Activated T-helper 1 cell treated with anti-CD3 and anti-CD28 coated beads, Interleukin-12 subunit alpha, Interleukin-12 subunit beta, Interleukin-2, Interleukin-4 antibody, amounts not matched to agents 30 ng/mL and 10 ng/mL and 1 ng/mL, durations not matched to agents 14 hours and 24 hours and 36 hours (primary cell): ENCODE measurements at regions of chr4 and their contacts with region 1.

Region 1: DNA sequence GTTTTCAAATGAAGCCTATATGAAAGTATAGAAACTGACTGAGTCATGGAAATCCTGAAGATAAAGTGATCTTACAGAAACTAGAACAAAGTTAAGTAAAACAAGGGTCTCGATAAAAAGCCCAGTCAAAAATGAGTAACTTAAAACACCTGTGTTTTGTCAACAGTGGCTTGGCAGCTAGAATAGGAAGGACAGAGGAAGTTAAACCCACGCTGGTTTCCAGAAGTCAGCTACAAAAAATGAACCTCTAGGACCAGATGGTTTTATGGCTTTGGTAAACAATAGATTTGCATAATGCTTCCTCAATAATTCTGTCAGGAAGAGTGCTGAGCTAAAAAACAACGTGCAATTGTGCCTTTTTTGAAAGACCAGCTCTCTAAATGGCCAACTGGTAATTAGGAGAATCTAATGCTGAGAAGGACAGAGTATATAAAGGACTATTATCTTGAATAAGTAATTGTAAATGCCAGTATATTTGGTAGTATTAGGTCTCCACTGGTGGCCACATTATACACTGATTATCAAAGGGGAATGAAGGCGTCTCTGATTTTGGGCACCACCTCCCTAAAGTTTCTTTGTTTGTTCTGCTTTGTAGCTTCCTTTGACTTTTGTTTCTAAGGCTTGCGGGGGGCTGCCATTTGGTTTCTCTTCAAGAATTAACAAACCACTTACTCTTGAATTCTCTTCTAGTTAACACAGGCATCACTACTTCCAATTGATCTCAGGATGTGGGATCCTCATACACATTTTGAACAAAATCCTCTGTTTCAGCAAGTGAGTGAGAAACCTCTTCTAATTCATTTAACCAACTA is 72.2 kb upstream of the PPP3CA start:
- DNase-seq: no peak
- H3K4me3 Mint-ChIP-seq: peak overlapping the region; percentile 65
- H3K27ac Mint-ChIP-seq: peak overlapping the region; percentile 79
- H3K4me1 Mint-ChIP-seq: peaks cover 58% of the 10 kb centered on the region
- H3K27me3 Mint-ChIP-seq: peaks cover 11% of the 10 kb centered on the region

Region 2: DNA sequence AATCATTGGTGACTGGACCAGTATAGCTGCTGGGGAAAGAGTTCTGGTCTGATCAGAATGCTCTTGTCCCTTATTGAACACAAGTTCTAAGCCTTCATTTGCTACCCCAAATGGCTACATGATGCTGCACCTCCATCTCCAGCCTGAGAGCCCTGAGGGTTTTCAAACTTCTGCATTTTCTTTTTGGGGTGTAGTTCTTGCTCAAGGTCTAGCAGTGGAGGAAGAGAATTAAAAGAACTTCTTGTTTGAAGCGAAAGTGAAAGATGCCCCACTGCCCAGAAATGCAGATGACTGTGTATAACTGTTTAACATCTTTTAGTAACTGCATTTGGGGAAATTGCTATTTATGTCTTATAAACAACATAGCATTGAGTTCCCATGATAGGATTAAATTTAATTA is 1563.9 kb before region 1 on chr4:
- intact Hi-C with region 1: loop called (anchors 5 kb)
- DNase-seq: no peak
- H3K4me3 Mint-ChIP-seq: peak overlapping the region; percentile 59
- H3K27ac Mint-ChIP-seq: peak overlapping the region; percentile 71
- H3K4me1 Mint-ChIP-seq: peaks cover 86% of the 10 kb centered on the region
- H3K27me3 Mint-ChIP-seq: no peaks in the 10 kb centered on the region

Region 3: DNA sequence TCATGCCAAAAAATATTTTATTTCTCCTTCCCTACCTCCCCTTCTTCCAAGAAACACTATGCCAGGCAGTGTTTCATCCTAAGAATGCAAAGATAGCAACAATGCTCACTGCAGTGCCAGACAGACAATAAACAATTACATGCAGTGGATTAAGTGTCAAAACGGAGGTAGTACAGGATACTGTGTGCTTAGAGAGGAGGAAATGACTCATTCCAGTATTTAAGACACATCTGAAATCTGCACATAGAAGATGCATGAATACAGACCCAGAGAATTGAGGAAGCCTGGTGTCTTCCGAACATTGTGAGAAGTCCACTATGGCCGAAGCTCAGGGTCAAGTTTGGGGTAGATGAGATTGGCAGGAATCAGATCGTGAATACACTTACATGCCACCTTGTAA is 398.6 kb before region 1 on chr4:
- intact Hi-C with region 1: loop called (anchors 1 kb)
- DNase-seq: peak; percentile 16
- H3K4me3 Mint-ChIP-seq: peak overlapping the region; percentile 43
- H3K27ac Mint-ChIP-seq: peak overlapping the region; percentile 67
- H3K4me1 Mint-ChIP-seq: peaks cover 62% of the 10 kb centered on the region
- H3K27me3 Mint-ChIP-seq: no peaks in the 10 kb centered on the region

Region 4: GRCh38 chr4:101282076-101282844 is 137.3 kb before region 1 on chr4:
- intact Hi-C with region 1: loop called (anchors 2 kb)
- DNase-seq: peak; percentile 8
- H3K4me3 Mint-ChIP-seq: peak overlapping the region; percentile 31
- H3K27ac Mint-ChIP-seq: no peak overlapping the region
- H3K4me1 Mint-ChIP-seq: peaks cover 43% of the 10 kb centered on the region
- H3K27me3 Mint-ChIP-seq: no peaks in the 10 kb centered on the region

Region 5: DNA sequence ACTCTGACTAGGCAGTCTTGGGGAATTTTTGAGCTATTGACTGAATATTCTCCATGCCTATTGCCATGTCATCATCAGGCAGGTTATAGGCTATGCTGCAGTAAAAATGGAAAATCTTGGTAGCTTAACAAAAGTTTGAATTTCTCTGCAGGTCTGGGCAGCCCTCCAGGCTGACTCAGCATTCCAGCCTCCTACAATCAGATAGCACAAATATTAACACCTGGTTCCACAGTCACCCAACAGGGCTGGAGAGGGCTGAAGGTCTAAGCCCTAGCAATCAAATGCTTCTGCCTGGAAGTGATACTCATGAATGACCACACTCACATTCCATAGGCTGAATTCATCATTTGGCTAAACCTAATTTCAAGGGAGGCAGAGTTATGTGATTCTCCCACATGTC is 62.6 kb before region 1 on chr4:
- intact Hi-C with region 1: no loop called
- DNase-seq: no peak
- H3K4me3 Mint-ChIP-seq: no peak overlapping the region
- H3K27ac Mint-ChIP-seq: no peak overlapping the region
- H3K4me1 Mint-ChIP-seq: no peaks in the 10 kb centered on the region
- H3K27me3 Mint-ChIP-seq: peaks cover 45% of the 10 kb centered on the region

Region 6: DNA sequence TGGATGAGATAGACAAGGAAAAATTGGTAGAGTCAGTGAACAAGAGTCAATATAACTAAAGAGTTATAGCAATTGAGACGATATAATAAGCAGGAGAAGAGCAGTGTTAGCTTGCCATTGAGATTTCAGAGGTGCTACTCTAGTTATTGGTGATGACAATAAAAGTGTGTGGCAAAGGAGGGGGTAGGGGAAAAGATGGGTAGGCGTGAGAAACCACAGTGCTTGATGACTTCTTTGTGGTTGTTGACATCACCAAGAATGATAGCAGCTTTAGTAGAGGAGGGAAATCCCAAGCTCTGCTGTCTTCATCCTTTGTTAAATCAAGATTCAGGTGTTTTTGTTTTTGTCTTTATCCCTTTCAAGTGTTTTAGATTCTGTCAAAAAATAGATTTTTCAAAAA is 107.7 kb after region 1 on chr4:
- intact Hi-C with region 1: loop called (anchors 1 kb)
- DNase-seq: peak; percentile 68
- H3K4me3 Mint-ChIP-seq: peak overlapping the region; percentile 8
- H3K27ac Mint-ChIP-seq: peak overlapping the region; percentile 67
- H3K4me1 Mint-ChIP-seq: peaks cover 32% of the 10 kb centered on the region
- H3K27me3 Mint-ChIP-seq: peaks cover 26% of the 10 kb centered on the region

Region 7: DNA sequence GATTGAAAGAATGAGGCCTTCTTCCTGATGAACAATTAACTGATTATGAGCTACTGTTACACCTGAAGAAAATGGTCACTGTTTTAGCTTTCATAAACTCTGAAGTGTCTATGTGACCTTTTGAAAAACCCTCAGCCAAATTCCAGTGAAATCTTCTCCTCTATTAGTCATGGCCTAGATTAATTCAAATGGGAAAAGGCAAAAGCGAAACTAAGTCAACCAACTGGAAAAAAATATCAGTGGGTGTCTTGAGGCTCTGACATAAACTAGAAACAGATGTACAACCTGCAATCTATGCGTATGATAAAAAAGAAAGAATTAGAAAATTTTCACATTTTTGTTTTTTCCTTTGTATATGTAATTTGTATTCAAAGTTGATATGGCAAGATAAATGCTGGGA is 201.6 kb after region 1 on chr4:
- intact Hi-C with region 1: no loop called
- DNase-seq: no peak
- H3K4me3 Mint-ChIP-seq: no peak overlapping the region
- H3K27ac Mint-ChIP-seq: no peak overlapping the region
- H3K4me1 Mint-ChIP-seq: peaks cover 7% of the 10 kb centered on the region
- H3K27me3 Mint-ChIP-seq: no peaks in the 10 kb centered on the region

Region 8: GRCh38 chr4:102390438-102390837 is 970.9 kb after region 1 on chr4:
- intact Hi-C with region 1: loop called (anchors 5 kb)
- DNase-seq: no peak
- H3K4me3 Mint-ChIP-seq: no peak overlapping the region
- H3K27ac Mint-ChIP-seq: peak overlapping the region; percentile 58
- H3K4me1 Mint-ChIP-seq: peaks cover 20% of the 10 kb centered on the region
- H3K27me3 Mint-ChIP-seq: peaks cover 7% of the 10 kb centered on the region

Region 9: DNA sequence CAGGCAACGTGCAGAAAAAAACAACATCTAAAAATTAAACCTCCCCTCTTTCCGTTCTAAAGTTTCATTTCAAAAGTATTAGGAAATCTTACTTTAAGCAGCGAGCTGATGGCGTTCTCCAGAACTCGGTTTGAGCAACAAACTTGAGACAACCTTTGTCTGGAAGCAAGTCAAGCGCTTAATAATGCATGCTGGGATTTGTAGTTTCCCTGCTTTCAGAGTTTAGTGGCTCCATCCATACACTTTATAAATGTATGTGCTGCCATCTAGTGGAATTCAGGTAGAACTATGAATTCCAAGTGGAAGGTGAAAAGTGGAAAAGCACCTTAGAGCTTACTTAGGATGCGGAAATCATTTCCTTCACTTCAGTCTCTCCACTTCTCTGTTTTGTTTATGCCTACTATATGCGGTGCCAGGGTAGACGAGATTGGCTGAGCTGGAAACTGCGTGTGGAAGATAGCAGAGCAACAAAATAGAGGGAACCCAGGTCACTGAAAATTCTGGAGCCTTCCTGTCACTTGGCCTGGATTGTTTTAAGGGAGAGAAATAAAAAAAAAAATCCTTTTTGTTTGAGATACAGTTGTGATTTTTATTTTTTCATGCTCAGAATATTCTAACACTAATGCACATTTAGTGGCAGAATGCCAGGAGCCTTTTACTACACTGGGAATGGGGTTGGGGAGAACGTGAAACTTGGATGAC is 1680.3 kb after region 1 on chr4 and contains the start of gene BDH2:
- intact Hi-C with region 1: loop called (anchors 10 kb)
- DNase-seq: peak; percentile 41
- H3K4me3 Mint-ChIP-seq: peak within 1 kb of the TSS; percentile 84
- H3K27ac Mint-ChIP-seq: peak within 1 kb of the TSS; percentile 86
- H3K4me1 Mint-ChIP-seq: peaks cover 28% of the 10 kb centered on the region
- H3K27me3 Mint-ChIP-seq: no peaks in the 10 kb centered on the region
- total RNA-seq, gene BDH2: 9.1 and 11.0 TPM in 2 replicates